WTC11 (cell line): ENCODE measurements at regions of chr6 and their contacts with region 1.

Region 1: GRCh38 chr6:119957195-119957594 is 607.6 kb upstream of the MAN1A1 start:
- DNase-seq: peak; percentile 33
- ATAC-seq: peak; percentile 95
- H3K4me3 Mint-ChIP-seq: no peak overlapping the region
- H3K27ac Mint-ChIP-seq: peak overlapping the region; percentile 75; the same call in 1 of the 2 replicates
- H3K4me1 Mint-ChIP-seq: peaks cover 22% of the 10 kb centered on the region
- H3K27me3 Mint-ChIP-seq: no peaks in the 10 kb centered on the region
- CTCF ChIP-seq: no peak

Region 2: GRCh38 chr6:119979862-119980261 is 22.7 kb after region 1 on chr6:
- CTCF ChIA-PET with region 1: interaction called, 14 read pairs
- POLR2A ChIA-PET with region 1: no interaction called
- DNase-seq: no peak
- ATAC-seq: no peak
- H3K4me3 Mint-ChIP-seq: no peak overlapping the region
- H3K27ac Mint-ChIP-seq: no peak overlapping the region
- H3K4me1 Mint-ChIP-seq: peaks cover 5% of the 10 kb centered on the region
- H3K27me3 Mint-ChIP-seq: no peaks in the 10 kb centered on the region
- CTCF ChIP-seq: no peak